Endothelial cell of umbilical vein (primary cell): ENCODE measurements at regions of chr9 and their contacts with region 1.

Region 1: GRCh38 chr9:122131401-122132001 is 28.1 kb downstream of the NDUFA8 start:
- DNase-seq: no peak
- H3K4me3 ChIP-seq: no peak overlapping the region
- H3K27ac ChIP-seq: no peak overlapping the region
- H3K4me1 ChIP-seq: peaks cover 35% of the 10 kb centered on the region
- H3K27me3 ChIP-seq: no peaks in the 10 kb centered on the region
- CTCF ChIP-seq: no peak
- POLR2A ChIP-seq: no peak

Region 2: GRCh38 chr9:122144836-122145591 is 13.5 kb after region 1 on chr9:
- CTCF ChIA-PET with region 1: interaction called, 73 read pairs
- POLR2A ChIA-PET with region 1: interaction called, 4 read pairs
- dilution Hi-C with region 1: no loop called
- intact Hi-C with region 1: loop called (anchors 1 kb)
- DNase-seq: peak; percentile 60
- H3K4me3 ChIP-seq: no peak overlapping the region
- H3K27ac ChIP-seq: no peak overlapping the region
- H3K4me1 ChIP-seq: peaks cover 45% of the 10 kb centered on the region
- H3K27me3 ChIP-seq: no peaks in the 10 kb centered on the region
- CTCF ChIP-seq: peak; percentile 53 to 62
- POLR2A ChIP-seq: no peak

Region 3: GRCh38 chr9:122246666-122247065 is 115.2 kb after region 1 on chr9:
- CTCF ChIA-PET with region 1: no interaction called
- POLR2A ChIA-PET with region 1: no interaction called
- dilution Hi-C with region 1: no loop called
- intact Hi-C with region 1: no loop called
- DNase-seq: no peak
- H3K4me3 ChIP-seq: no peak overlapping the region
- H3K27ac ChIP-seq: no peak overlapping the region
- H3K4me1 ChIP-seq: peaks cover 19% of the 10 kb centered on the region
- H3K27me3 ChIP-seq: no peaks in the 10 kb centered on the region
- CTCF ChIP-seq: no peak
- POLR2A ChIP-seq: no peak